Activated T-helper 1 cell treated with anti-CD3 and anti-CD28 coated beads, Interleukin-12 subunit alpha, Interleukin-12 subunit beta, Interleukin-2, Interleukin-4 antibody, amounts not matched to agents 30 ng/mL and 10 ng/mL and 1 ng/mL, durations not matched to agents 14 hours and 24 hours and 36 hours (primary cell): ENCODE measurements at regions of chr1 and their contacts with region 1.

Region 1: GRCh38 chr1:42335050-42335808 is at the start of gene FOXJ3:
- DNase-seq: peak; percentile 87
- H3K4me3 Mint-ChIP-seq: peak within 1 kb of the TSS; percentile 90
- H3K27ac Mint-ChIP-seq: peak within 1 kb of the TSS; percentile 91
- H3K4me1 Mint-ChIP-seq: peaks cover 47% of the 10 kb centered on the region
- H3K27me3 Mint-ChIP-seq: no peaks in the 10 kb centered on the region
- total RNA-seq, gene FOXJ3: 50.1 and 51.6 TPM in 2 replicates

Region 2: DNA sequence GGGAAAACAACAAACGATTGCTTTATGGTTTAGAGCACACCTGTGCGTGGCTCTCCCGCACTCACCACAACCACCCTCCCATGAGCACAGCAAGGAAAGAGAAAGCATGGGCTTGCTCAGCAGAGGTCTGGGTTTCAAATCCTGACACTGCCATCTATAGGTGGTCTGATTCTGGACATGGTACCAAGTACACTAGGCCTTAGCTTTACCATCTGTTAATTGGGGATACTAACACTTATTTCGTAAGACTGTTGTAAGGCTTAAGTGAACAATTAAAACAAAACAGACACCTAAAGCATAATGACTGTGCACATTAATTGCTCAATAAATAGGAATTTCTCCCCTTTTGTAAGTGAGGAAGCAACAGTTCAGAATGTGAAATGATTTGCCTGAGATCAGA is 466.6 kb before region 1 on chr1:
- intact Hi-C with region 1: loop called (anchors 10 kb)
- DNase-seq: peak; percentile 44
- H3K4me3 Mint-ChIP-seq: no peak overlapping the region
- H3K27ac Mint-ChIP-seq: peak overlapping the region; percentile 54
- H3K4me1 Mint-ChIP-seq: peaks cover 26% of the 10 kb centered on the region
- H3K27me3 Mint-ChIP-seq: no peaks in the 10 kb centered on the region

Region 3: GRCh38 chr1:42380586-42381279 is 45.5 kb after region 1 on chr1 and contains the start of gene RIMKLA:
- intact Hi-C with region 1: loop called (anchors 2 kb)
- DNase-seq: peak; percentile 53
- H3K4me3 Mint-ChIP-seq: peak within 1 kb of the TSS; percentile 85
- H3K27ac Mint-ChIP-seq: peak within 1 kb of the TSS; percentile 49
- H3K4me1 Mint-ChIP-seq: peaks cover 22% of the 10 kb centered on the region
- H3K27me3 Mint-ChIP-seq: peaks cover 25% of the 10 kb centered on the region
- total RNA-seq, gene RIMKLA: 3.3 and 4.8 TPM in 2 replicates

Region 4: GRCh38 chr1:42462828-42463763 is 127.9 kb after region 1 on chr1 and contains the start of gene CCDC30:
- intact Hi-C with region 1: loop called (anchors 1 kb)
- DNase-seq: peak; percentile 96
- H3K4me3 Mint-ChIP-seq: peak within 1 kb of the TSS; percentile 81
- H3K27ac Mint-ChIP-seq: peak within 1 kb of the TSS; percentile 70
- H3K4me1 Mint-ChIP-seq: peaks cover 31% of the 10 kb centered on the region
- H3K27me3 Mint-ChIP-seq: peaks cover 9% of the 10 kb centered on the region
- total RNA-seq, gene CCDC30: 1.0 and 1.9 TPM in 2 replicates

Region 5: DNA sequence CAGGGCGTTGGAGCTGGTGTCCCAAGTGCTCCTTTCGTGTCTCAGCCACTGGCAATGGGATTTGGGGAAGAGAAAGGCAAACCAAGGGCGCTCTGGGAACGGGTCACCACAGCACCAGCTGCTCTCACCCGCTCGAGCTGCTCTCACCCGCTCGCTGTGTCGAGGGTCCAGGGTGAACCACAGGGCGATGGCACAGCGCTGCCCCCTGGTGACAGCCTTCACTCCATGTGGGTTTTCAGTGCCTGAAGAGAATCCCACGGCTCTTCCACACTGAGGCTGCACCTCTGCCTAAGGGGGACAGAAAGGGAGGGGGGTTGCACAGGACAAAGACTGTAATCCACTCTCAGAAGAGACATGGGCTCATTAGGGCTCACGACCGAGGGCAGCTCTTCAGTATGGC is 411.9 kb after region 1 on chr1:
- intact Hi-C with region 1: loop called (anchors 5 kb)
- DNase-seq: no peak
- H3K4me3 Mint-ChIP-seq: no peak overlapping the region
- H3K27ac Mint-ChIP-seq: no peak overlapping the region
- H3K4me1 Mint-ChIP-seq: no peaks in the 10 kb centered on the region
- H3K27me3 Mint-ChIP-seq: no peaks in the 10 kb centered on the region

Region 6: GRCh38 chr1:43073490-43074230 is 738.4 kb after region 1 on chr1:
- intact Hi-C with region 1: loop called (anchors 5 kb)
- DNase-seq: peak; percentile 58
- H3K4me3 Mint-ChIP-seq: no peak overlapping the region
- H3K27ac Mint-ChIP-seq: no peak overlapping the region
- H3K4me1 Mint-ChIP-seq: peaks cover 6% of the 10 kb centered on the region
- H3K27me3 Mint-ChIP-seq: peaks cover 4% of the 10 kb centered on the region